Activated CD8-positive, alpha-beta T cell treated with anti-CD3 and anti-CD28 coated beads for 36 hours (primary cell): ENCODE measurements at regions of chr18 and their contacts with region 1.

Region 1: GRCh38 chr18:23515911-23516546 is 12.7 kb downstream of the RMC1 start:
- DNase-seq: peak; percentile 85
- ATAC-seq: peak; percentile 99
- H3K4me3 Mint-ChIP-seq: no peak overlapping the region
- H3K27ac Mint-ChIP-seq: peak overlapping the region; percentile 52
- H3K4me1 Mint-ChIP-seq: peaks cover 10% of the 10 kb centered on the region
- H3K27me3 Mint-ChIP-seq: no peaks in the 10 kb centered on the region
- CTCF ChIP-seq: peak; percentile 82

Region 2: DNA sequence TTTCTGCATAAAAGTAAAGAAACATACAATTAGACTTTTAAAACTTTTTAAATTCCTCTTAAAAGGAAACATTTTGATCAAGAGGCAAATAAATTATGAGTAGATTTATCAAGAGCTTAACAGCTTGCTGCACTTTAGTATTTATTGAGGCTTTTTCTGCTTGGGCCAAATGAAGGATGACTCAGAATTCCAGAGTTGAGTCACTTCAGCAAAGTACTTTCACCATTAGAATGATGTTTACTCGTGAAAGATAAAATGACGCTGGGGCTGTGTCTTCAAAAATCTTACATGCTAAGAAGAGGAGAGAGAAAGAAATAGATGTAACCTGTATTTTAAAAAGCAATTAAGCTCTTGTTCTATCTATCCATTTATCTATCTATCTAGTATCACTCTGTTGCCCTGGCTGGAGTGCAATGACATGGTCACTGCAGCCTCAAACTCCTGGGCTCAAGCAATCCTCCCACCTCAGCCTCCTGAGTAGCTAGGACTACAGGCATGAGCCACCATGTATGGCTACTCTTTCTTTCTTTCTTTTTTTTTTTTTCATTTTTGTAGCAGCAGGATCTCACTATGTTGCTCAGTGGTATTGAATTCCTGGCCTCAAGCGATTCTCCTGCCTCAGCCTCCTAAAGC is 138.2 kb before region 1 on chr18:
- CTCF ChIA-PET with region 1: no interaction called
- POLR2A ChIA-PET with region 1: no interaction called
- intact Hi-C with region 1: no loop called
- DNase-seq: no peak
- ATAC-seq: peak; percentile 84
- H3K4me3 Mint-ChIP-seq: no peak overlapping the region
- H3K27ac Mint-ChIP-seq: no peak overlapping the region
- H3K4me1 Mint-ChIP-seq: peaks cover 15% of the 10 kb centered on the region
- H3K27me3 Mint-ChIP-seq: no peaks in the 10 kb centered on the region
- CTCF ChIP-seq: no peak

Region 3: DNA sequence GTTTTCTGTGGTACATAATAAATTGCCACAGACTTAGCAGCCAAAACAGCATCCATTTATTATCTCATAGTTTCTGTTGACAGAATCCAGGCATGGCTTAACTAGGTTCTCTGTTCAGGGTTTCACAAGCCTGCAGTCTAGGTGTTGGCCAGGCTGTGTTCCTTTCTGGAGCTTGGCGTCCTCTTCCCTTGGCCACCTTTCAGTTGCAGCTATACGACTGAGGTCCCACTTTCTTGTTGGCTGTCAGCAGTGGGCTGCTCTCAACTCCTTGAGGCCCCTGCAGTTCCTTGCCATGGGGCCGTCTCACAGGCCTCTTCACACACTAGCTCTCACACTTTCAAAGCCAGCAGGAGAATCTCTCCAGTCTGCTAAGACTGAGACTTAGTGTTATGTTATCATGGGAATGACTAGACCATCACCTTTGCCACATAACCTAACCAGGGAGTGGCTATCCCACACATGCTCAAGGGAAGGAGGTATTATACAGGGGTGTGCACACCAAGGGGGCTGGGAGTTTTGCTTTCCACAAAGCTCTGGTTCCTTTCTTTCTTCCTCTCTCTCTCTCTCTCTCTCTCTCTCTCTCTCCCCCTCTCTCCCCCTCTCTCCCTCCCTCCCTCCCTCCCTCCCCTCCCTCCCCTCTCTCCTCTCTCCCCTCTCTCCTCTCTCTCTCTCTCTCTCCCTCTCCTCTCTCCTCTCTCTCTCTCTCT is 47.1 kb before region 1 on chr18:
- CTCF ChIA-PET with region 1: no interaction called
- POLR2A ChIA-PET with region 1: no interaction called
- intact Hi-C with region 1: no loop called
- DNase-seq: no peak
- ATAC-seq: no peak
- H3K4me3 Mint-ChIP-seq: no peak overlapping the region
- H3K27ac Mint-ChIP-seq: no peak overlapping the region
- H3K4me1 Mint-ChIP-seq: no peaks in the 10 kb centered on the region
- H3K27me3 Mint-ChIP-seq: no peaks in the 10 kb centered on the region
- CTCF ChIP-seq: no peak

Region 4: DNA sequence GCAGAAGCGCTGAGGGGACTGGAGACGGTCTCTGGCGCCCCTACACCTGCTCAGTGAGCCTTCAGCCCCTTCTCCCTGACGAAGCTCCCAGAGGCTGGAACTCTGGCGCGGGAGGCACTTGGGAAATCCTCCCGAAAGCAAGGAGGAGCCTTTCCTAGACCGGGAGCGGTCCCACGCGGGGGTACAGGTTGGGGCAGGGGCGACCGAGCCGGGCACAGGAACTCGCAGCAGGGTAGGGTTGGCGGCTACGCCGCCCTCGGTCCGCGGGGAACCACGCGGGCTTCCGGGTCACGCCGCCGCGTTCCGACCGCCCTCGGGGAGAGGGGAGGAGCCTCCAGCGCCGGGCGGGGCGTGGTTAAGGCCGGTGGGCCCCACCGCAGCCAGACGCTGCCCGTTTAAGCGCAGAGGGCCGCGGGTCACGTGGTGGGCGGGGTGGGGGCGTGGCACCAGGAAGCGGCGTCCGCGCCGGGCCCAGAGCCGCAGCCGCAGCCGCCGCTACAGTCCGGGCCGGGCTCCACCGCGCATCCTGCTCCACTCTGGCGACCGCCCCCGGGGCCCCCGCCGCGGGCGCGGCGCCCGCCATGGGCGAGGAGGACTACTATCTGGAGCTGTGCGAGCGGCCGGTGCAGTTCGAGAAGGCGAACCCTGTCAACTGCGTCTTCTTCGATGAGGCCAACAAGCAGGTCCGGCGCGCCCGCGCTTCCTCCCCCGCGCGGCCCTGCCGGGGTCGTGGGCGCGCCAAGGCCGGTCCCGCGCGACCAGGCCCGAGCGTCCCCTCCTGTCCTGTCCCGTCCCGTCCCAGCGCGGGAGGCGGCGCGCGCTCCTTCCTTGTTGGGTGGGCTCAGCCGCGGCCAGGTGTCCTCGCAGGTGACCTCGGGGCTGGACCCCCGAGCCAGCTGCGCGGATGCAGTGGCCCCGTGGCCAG is 12.7 kb before region 1 on chr18 and contains the start of gene RMC1:
- CTCF ChIA-PET with region 1: interaction called, 44 read pairs
- POLR2A ChIA-PET with region 1: no interaction called
- intact Hi-C with region 1: no loop called
- DNase-seq: peak; percentile 97
- ATAC-seq: peak; percentile 94
- H3K4me3 Mint-ChIP-seq: peak within 1 kb of the TSS; percentile 97
- H3K27ac Mint-ChIP-seq: peak within 1 kb of the TSS; percentile 89
- H3K4me1 Mint-ChIP-seq: peaks cover 36% of the 10 kb centered on the region
- H3K27me3 Mint-ChIP-seq: no peaks in the 10 kb centered on the region
- CTCF ChIP-seq: no peak
- total RNA-seq, gene RMC1: 26.1 to 28.5 TPM

Region 5: DNA sequence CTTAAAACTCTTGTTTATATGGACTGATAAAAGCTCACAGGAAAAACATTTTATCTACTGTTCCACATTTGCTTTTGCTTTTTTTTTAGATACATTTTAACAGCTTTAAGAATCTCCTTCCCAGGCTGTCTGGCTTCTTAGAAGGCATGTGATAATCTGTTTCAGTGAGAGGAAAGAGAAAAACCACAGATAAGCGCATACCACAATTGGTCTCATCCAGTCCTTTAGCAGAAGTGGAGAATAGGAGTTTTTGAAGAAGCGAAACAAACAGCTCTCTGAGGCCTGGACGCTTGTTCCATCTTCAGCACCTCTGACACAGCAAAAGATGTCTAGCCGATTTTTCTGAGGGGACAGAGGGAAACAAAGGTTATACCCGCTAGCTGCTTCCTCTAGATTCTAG is 24.8 kb after region 1 on chr18:
- CTCF ChIA-PET with region 1: interaction called, 13 read pairs
- POLR2A ChIA-PET with region 1: no interaction called
- intact Hi-C with region 1: no loop called
- DNase-seq: peak; percentile 13
- ATAC-seq: peak; percentile 66
- H3K4me3 Mint-ChIP-seq: no peak overlapping the region
- H3K27ac Mint-ChIP-seq: peak overlapping the region; percentile 44
- H3K4me1 Mint-ChIP-seq: peaks cover 28% of the 10 kb centered on the region
- H3K27me3 Mint-ChIP-seq: no peaks in the 10 kb centered on the region
- CTCF ChIP-seq: no peak

Region 6: GRCh38 chr18:23580677-23581367 is 64.8 kb after region 1 on chr18:
- CTCF ChIA-PET with region 1: interaction called, 19 read pairs
- POLR2A ChIA-PET with region 1: interaction called, 4 read pairs
- intact Hi-C with region 1: loop called (anchors 5 kb)
- DNase-seq: no peak
- ATAC-seq: no peak
- H3K4me3 Mint-ChIP-seq: no peak overlapping the region
- H3K27ac Mint-ChIP-seq: no peak overlapping the region
- H3K4me1 Mint-ChIP-seq: peaks cover 52% of the 10 kb centered on the region
- H3K27me3 Mint-ChIP-seq: no peaks in the 10 kb centered on the region
- CTCF ChIP-seq: no peak

Region 7: DNA sequence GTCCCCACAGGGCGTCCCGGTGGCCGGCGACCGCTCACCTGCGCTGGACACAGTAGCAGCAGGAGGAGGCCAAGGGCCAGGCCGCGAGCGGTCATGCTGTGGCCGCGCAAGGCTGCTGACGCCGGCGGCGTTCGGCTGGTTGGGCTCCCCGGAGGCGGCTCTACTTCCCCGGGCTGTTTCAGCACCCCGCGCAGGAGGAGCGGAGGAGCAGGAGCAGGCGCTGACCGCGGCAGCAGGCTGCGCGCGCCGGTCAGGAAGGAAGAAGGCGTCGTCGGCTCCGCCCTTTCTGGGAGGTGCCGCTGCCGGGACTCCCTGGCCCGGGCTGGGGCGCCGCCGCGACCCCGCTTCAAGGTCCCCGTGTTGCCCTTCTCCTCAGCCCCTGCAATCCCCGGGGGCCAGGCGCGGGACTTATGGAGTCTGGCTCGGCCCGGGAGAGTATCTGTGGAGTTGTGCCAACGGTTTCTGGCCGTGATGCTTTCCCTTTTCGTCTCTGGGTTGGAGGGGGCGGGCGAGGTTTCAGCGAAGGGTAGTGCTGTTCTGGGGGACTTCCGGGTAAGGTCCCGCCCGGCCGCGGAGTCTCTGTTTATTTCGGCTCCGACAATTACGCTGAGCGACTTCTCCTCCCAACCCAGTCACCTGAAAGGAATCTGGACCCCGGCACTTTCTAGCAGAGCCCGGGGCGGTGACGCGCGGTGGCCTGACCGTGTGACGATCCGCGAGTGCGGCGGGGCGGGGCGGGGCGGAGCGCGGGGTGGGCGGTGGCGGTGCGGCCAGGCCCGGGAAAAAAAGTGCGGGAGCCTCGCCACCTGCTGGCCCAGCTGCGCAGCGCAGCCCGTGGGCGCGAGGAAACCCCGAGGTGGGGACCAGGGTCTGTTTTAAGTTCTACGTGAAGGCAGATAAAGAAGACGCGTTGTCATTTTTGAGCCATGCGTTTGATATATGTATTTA is 70.5 kb after region 1 on chr18 and contains the start of gene NPC1:
- CTCF ChIA-PET with region 1: interaction called, 19 read pairs
- POLR2A ChIA-PET with region 1: interaction called, 4 read pairs
- intact Hi-C with region 1: loop called (anchors 5 kb)
- DNase-seq: peak; percentile 91
- ATAC-seq: peak; percentile 93
- H3K4me3 Mint-ChIP-seq: peak within 1 kb of the TSS; percentile 94
- H3K27ac Mint-ChIP-seq: peak within 1 kb of the TSS; percentile 94
- H3K4me1 Mint-ChIP-seq: peaks cover 35% of the 10 kb centered on the region
- H3K27me3 Mint-ChIP-seq: no peaks in the 10 kb centered on the region
- CTCF ChIP-seq: peak; percentile 93
- total RNA-seq, gene NPC1: 21.5 to 22.9 TPM

Region 8: DNA sequence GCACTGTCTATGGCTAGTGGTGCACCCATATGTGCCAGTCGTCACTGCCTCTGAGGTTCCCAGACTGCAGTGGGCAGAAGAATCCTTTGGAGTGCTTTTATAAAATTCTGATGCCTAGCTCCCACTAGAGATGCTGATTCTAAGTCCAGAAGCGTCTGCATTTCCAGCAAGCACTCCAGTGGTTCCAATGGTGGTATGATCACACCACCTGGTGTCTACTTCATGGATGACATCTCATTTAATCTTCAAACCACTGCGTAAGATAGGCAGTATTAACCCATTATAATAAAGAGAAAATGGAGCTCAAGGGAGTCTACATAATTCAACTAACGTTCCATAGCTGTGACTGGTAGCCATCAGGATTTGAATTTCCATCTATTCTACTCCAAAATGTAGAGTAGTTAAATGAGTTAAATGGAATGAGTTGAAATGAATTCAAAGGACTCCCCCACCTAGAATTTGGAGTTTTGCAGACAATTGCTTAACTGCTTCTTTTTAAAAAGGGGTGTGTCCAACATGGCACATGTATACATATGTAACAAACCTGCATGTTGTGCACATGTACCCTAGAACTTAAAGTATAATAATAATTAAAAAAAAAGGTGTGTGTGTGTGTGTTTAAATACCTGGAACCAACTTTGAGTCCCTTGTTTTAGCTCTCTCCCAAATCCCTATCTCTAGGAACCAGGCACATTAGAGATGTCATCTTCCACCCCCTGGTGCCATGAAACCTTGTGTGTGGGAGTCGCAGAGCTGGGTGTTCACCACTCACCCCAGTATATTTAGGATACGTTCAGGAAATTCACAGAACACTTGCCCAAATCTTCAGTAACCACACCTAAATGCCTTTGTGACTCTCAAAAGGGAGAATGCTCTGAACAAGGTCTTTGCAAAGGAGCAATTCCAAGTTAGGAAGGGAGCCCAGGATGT is 187.3 kb after region 1 on chr18:
- CTCF ChIA-PET with region 1: interaction called, 11 read pairs
- POLR2A ChIA-PET with region 1: no interaction called
- intact Hi-C with region 1: no loop called
- DNase-seq: peak; percentile 15
- ATAC-seq: peak; percentile 68
- H3K4me3 Mint-ChIP-seq: no peak overlapping the region
- H3K27ac Mint-ChIP-seq: no peak overlapping the region
- H3K4me1 Mint-ChIP-seq: no peaks in the 10 kb centered on the region
- H3K27me3 Mint-ChIP-seq: peaks cover 15% of the 10 kb centered on the region
- CTCF ChIP-seq: peak; percentile 52

Region 9: GRCh38 chr18:23805898-23806297 is 289.9 kb after region 1 on chr18:
- CTCF ChIA-PET with region 1: no interaction called
- POLR2A ChIA-PET with region 1: no interaction called
- intact Hi-C with region 1: loop called (anchors 10 kb)
- DNase-seq: no peak
- ATAC-seq: no peak
- H3K4me3 Mint-ChIP-seq: no peak overlapping the region
- H3K27ac Mint-ChIP-seq: no peak overlapping the region
- H3K4me1 Mint-ChIP-seq: peaks cover 15% of the 10 kb centered on the region
- H3K27me3 Mint-ChIP-seq: peaks cover 1% of the 10 kb centered on the region
- CTCF ChIP-seq: no peak